HepG2 (cell line): ENCODE measurements at regions of chr12 and their contacts with region 1.

Region 1: DNA sequence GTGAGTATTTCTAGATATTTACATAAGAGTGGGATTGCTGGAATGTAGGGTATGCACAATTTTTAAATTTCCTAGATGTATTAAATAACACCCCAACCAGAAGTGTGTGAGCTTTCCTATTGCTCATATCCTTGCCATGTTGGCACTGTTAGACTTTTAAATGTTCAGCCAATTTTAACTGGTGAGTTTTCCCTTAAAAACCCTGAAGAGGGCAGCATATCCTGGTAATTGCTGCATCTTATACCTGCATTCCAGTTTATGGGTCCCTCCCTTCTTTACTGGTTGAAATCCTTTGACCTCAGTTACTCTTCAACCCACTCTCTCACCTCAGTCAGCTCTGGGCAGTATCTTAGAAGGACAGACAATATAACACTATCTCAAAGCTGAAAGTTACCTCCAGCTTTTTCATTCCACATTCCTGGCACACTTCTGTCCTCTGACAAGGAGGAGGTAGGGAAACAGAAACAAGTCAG is 270.6 kb downstream of the PAWR start:
- DNase-seq: peak; percentile 73
- ATAC-seq: peak; percentile 72
- H3K4me3 ChIP-seq: no peak overlapping the region
- H3K27ac ChIP-seq: no peak overlapping the region
- H3K4me1 ChIP-seq: peaks cover 73% of the 10 kb centered on the region
- H3K27me3 ChIP-seq: no peaks in the 10 kb centered on the region
- CTCF ChIP-seq: peak; percentile 82
- EP300 ChIP-seq: no peak
- POLR2A ChIP-seq: no peak
- RAD21 ChIP-seq: peak; percentile 68

Region 2: GRCh38 chr12:79358716-79359300 is 61.4 kb before region 1 on chr12:
- CTCF ChIA-PET with region 1: no interaction called
- POLR2A ChIA-PET with region 1: no interaction called
- in situ Hi-C with region 1: no loop called
- intact Hi-C with region 1: no loop called
- DNase-seq: no peak
- ATAC-seq: no peak
- H3K4me3 ChIP-seq: no peak overlapping the region
- H3K27ac ChIP-seq: no peak overlapping the region
- H3K4me1 ChIP-seq: no peaks in the 10 kb centered on the region
- H3K27me3 ChIP-seq: no peaks in the 10 kb centered on the region
- CTCF ChIP-seq: no peak
- EP300 ChIP-seq: no peak
- POLR2A ChIP-seq: no peak
- RAD21 ChIP-seq: no peak

Region 3: DNA sequence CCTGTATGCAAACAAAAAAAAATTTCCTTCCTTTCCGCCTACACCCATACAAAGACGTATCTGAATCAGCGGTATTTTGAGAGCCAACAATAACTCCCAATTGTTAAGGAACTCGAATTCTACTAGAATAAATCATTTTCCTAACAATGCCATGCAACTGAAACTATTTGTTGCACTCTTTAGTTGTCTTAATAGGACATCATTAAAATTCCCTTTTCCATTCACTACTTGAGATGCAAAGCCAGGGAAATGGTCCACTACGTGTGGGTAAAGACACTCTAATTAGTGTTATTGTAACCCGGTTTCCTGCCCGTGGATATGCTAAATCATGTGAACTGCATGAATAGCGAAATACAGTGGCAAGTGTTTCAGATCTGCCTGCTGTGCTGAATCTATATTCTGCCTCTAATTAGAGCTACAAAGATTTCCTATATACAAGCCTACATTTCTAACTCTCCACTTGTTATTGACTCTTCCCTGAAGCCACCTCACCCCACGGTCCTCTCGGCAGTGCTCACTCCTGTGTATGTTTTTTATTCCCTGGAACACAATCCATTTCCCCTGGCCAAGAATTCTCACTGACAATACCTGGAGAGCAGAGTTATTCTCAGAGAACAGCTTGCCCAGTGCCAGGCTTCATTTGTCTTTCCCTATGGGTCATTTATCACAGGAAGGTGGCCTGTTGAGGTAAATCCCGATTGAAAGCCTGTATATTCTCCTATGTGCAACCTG is 102.2 kb after region 1 on chr12:
- CTCF ChIA-PET with region 1: no interaction called
- POLR2A ChIA-PET with region 1: no interaction called
- in situ Hi-C with region 1: loop called (anchors 10 kb)
- intact Hi-C with region 1: no loop called
- DNase-seq: no peak
- ATAC-seq: no peak
- H3K4me3 ChIP-seq: no peak overlapping the region
- H3K27ac ChIP-seq: no peak overlapping the region
- H3K4me1 ChIP-seq: peaks cover 30% of the 10 kb centered on the region
- H3K27me3 ChIP-seq: no peaks in the 10 kb centered on the region
- CTCF ChIP-seq: no peak
- EP300 ChIP-seq: no peak
- POLR2A ChIP-seq: no peak
- RAD21 ChIP-seq: no peak

Region 4: GRCh38 chr12:79531122-79531913 is 111.1 kb after region 1 on chr12:
- CTCF ChIA-PET with region 1: no interaction called
- POLR2A ChIA-PET with region 1: interaction called, 3 read pairs
- in situ Hi-C with region 1: loop called (anchors 10 kb)
- intact Hi-C with region 1: loop called (anchors 5 kb)
- DNase-seq: peak; percentile 46
- ATAC-seq: no peak
- H3K4me3 ChIP-seq: no peak overlapping the region
- H3K27ac ChIP-seq: peak overlapping the region; percentile 71
- H3K4me1 ChIP-seq: peaks cover 75% of the 10 kb centered on the region
- H3K27me3 ChIP-seq: no peaks in the 10 kb centered on the region
- CTCF ChIP-seq: no peak
- EP300 ChIP-seq: 0 out of 4 replicates have a peak, but pooled peaks of 1 of the 2 experiments have one; percentile 14
- POLR2A ChIP-seq: no peak
- RAD21 ChIP-seq: no peak

Region 5: DNA sequence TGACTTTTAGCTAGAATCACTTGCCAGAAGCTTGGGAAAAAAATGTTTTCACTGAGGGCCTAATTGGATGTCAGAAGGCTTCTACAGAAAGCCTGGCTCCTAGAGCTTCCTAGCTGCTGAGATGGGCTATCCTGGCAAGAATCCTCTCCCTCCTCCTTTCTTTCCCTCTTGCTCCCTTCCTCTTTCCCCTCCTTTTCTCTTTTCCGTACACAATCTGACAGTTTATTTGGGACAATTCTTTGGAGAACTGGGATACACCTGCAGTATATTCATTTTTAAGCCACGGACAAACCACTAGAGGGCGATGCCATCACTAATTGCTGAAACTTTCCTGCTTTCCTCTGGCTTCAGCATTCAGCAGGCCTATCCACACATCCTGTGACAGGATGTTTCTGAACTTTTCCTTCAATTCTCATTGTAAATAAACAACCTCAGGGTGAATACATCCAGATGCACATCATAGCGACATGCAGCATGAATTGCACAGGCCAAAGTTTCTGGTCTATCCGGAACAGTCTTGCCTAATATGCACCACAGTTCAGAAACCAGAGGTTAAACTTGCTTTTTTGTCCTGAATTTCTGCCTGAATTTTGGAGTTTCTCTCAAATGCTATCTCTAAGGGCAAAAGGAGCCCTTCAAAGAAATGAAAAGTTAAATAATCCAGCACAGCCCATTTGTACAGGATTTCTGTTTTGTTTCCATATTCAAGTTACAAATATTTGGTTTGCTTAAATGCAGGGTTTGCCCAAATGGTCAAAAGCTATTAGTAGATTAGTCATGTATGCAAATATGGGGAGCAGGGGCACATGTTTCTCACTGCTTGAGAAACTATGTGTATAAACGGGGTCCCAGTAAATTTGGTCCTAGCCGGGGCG is 127.8 kb after region 1 on chr12:
- CTCF ChIA-PET with region 1: interaction called, 3 read pairs
- POLR2A ChIA-PET with region 1: interaction called, 8 read pairs
- in situ Hi-C with region 1: no loop called
- intact Hi-C with region 1: loop called (anchors 1 kb)
- DNase-seq: peak; percentile 91
- ATAC-seq: peak; percentile 78
- H3K4me3 ChIP-seq: peak overlapping the region in 1 of 3 experiments; percentile 1; a peak in 1 of 6 replicates
- H3K27ac ChIP-seq: peak overlapping the region; percentile 78
- H3K4me1 ChIP-seq: peaks cover 74% of the 10 kb centered on the region
- H3K27me3 ChIP-seq: no peaks in the 10 kb centered on the region
- CTCF ChIP-seq: peak; percentile 83
- EP300 ChIP-seq: peak in 1 of 2 experiments; percentile 90; a peak in 2 of 4 replicates
- POLR2A ChIP-seq: peak in 1 of 2 experiments; percentile 36; a peak in 1 of 4 replicates
- RAD21 ChIP-seq: no peak

Region 6: DNA sequence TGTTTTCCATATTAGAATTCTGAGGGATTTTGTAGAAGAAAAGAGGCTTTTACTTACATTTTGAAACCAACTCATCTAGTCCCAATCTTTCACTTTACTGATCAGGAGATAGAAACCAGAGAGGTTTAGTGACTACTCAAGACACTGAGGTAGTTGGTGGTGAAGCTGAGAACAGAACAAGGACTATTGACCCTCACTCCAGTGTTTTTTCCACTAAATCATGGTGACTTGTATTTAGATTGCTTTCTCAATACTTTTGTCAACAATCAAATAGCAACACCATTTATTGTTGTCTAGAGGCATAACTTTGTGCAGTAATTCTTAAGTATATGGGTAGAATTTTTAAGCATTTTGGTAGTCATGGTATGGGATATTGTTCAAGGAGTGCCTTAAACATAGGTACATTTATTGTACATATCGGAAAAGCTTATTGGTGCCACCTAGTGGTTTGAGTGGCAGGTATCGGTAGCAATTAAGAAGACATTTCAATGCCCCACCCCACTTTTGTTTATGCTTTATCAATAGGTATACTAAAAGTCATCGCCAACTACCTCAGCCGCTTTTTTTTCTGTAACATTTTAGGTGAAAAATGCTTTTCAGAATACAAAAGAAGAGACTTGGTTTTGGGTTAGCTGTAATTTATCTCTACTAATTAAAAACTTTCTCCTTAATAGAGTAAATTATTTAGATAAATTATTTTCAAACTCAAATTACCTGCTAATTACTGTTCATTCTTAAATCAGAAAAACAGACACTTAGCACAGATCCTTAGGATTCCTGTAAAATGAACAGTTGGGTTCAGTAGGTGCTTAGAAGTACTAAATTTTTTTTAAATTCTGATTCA is 317.9 kb after region 1 on chr12:
- CTCF ChIA-PET with region 1: interaction called, 17 read pairs
- POLR2A ChIA-PET with region 1: no interaction called
- in situ Hi-C with region 1: no loop called
- intact Hi-C with region 1: loop called (anchors 1 kb)
- DNase-seq: peak; percentile 68
- ATAC-seq: peak; percentile 84
- H3K4me3 ChIP-seq: no peak overlapping the region
- H3K27ac ChIP-seq: no peak overlapping the region
- H3K4me1 ChIP-seq: peaks cover 6% of the 10 kb centered on the region
- H3K27me3 ChIP-seq: no peaks in the 10 kb centered on the region
- CTCF ChIP-seq: peak; percentile 77
- EP300 ChIP-seq: no peak
- POLR2A ChIP-seq: no peak
- RAD21 ChIP-seq: peak; percentile 46; the same call in 1 of the 2 replicates

Region 7: DNA sequence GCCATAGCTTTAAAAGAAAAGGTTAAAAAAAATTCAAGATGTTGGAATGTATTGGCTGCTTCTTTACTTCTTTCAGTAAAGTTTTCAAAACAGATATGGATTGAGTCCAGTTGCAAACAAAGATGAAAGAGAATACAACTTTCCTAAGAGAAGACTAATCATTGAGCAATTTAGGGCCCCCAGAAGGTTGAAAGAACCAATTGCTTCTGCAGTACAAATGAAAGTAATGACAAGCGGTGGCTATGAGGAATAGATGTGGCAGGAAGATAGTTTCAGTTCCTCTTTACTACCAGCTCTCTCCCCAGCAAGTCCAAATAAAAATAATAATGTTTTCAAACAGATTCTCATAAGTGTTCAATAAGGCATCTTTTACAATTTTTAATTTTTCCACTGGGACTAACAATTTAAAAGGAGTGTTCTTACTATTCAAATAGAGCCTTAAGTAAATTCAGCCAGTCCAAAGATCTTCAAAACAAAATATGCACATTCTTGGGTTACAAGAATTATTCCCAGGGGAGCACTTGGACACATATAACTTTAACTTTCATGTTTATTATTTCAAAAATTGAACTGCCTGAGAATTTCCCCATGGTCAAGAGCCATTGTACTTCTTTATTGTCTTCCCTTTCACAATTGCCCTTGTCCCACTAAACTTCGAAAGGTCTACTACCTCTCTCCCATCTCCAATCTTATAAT is 577.1 kb after region 1 on chr12:
- CTCF ChIA-PET with region 1: no interaction called
- POLR2A ChIA-PET with region 1: no interaction called
- in situ Hi-C with region 1: loop called (anchors 10 kb)
- intact Hi-C with region 1: no loop called
- DNase-seq: no peak
- ATAC-seq: no peak
- H3K4me3 ChIP-seq: no peak overlapping the region
- H3K27ac ChIP-seq: no peak overlapping the region
- H3K4me1 ChIP-seq: no peaks in the 10 kb centered on the region; the same call in 1 of the 2 replicates
- H3K27me3 ChIP-seq: no peaks in the 10 kb centered on the region
- CTCF ChIP-seq: no peak
- EP300 ChIP-seq: no peak
- POLR2A ChIP-seq: no peak
- RAD21 ChIP-seq: no peak

Region 8: DNA sequence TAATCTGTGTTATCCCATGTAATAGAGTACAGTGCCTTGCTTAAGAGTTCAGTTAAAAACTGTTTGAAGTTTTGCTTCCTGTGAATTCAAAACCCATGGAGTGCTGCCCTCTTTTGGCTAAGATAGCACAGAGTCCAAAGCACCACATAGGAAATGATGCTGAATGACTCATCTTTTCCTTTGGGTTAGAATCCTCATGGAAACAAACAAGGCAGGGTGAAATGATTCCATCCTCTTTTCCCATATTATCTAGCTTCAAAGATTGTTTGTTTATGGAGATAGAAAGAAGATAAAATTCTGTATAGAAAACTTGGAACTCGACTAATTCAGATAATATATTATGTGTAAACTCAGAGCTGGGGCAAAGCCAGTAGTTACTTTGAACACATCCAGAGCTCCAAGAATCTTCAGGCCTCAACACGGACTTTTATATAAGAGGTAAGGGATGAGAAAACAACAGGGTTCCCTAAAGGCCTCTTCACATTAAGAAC is 766.6 kb after region 1 on chr12:
- CTCF ChIA-PET with region 1: no interaction called
- POLR2A ChIA-PET with region 1: no interaction called
- in situ Hi-C with region 1: no loop called
- intact Hi-C with region 1: loop called (anchors 2 kb)
- DNase-seq: peak; percentile 82
- ATAC-seq: peak; percentile 95
- H3K4me3 ChIP-seq: no peak overlapping the region
- H3K27ac ChIP-seq: no peak overlapping the region
- H3K4me1 ChIP-seq: peaks cover 4% of the 10 kb centered on the region; the same call in 1 of the 2 replicates
- H3K27me3 ChIP-seq: no peaks in the 10 kb centered on the region
- CTCF ChIP-seq: peak; percentile 85
- EP300 ChIP-seq: no peak
- POLR2A ChIP-seq: no peak
- RAD21 ChIP-seq: peak; percentile 61; the same call in 1 of the 2 replicates